MCF 10A (cell line): ENCODE measurements at regions of chr1 and their contacts with region 1.

Region 1: GRCh38 chr1:193104906-193105820 is at the start of gene GLRX2:
- DNase-seq: peak; percentile 90
- H3K4me3 Mint-ChIP-seq: peak within 1 kb of the TSS; percentile 91
- H3K27ac Mint-ChIP-seq: peak within 1 kb of the TSS; percentile 89
- H3K4me1 Mint-ChIP-seq: peaks cover 20% of the 10 kb centered on the region
- H3K27me3 Mint-ChIP-seq: no peaks in the 10 kb centered on the region
- CTCF ChIP-seq: no peak
- total RNA-seq, gene GLRX2: 59.8 and 74.2 TPM in 2 replicates

Region 2: GRCh38 chr1:192793983-192794767 is 311.0 kb before region 1 on chr1:
- CTCF ChIA-PET with region 1: no interaction called
- POLR2A ChIA-PET with region 1: no interaction called
- intact Hi-C with region 1: no loop called
- DNase-seq: no peak
- H3K4me3 Mint-ChIP-seq: no peak overlapping the region
- H3K27ac Mint-ChIP-seq: no peak overlapping the region
- H3K4me1 Mint-ChIP-seq: no peaks in the 10 kb centered on the region
- H3K27me3 Mint-ChIP-seq: no peaks in the 10 kb centered on the region
- CTCF ChIP-seq: no peak

Region 3: DNA sequence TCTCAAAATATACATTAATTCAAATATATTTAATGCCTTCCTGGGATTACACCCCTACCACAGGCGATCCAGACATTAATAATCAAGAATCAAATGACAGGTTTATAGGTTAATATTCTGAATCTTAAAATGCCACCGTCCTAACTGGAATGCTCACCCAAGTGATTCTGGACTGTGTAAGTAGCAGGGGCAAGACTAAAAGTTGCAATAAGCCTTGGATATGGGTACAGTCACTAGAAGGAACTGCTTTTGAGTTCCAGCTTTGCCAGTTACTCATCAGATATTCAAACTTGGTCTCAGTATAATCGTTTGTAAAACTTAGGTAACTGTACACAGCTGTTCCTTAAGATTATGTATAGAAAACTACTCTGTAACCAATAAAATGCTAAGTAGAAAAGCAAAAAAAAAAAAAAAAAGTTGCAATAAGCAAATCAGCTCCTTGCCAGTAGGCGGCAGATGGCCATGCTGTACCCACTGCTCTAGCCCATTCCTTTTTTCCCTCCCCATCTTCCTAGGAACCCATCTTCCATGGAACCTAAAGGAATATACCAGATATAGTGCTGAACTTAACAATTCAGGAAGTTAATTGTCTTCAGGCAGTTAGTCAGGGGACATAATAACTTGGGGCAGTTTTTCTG is 35.3 kb before region 1 on chr1:
- CTCF ChIA-PET with region 1: interaction called, 3 read pairs
- POLR2A ChIA-PET with region 1: interaction called, 19 read pairs
- intact Hi-C with region 1: no loop called
- DNase-seq: peak; percentile 50
- H3K4me3 Mint-ChIP-seq: no peak overlapping the region
- H3K27ac Mint-ChIP-seq: no peak overlapping the region
- H3K4me1 Mint-ChIP-seq: peaks cover 13% of the 10 kb centered on the region
- H3K27me3 Mint-ChIP-seq: no peaks in the 10 kb centered on the region
- CTCF ChIP-seq: peak; percentile 28

Region 4: GRCh38 chr1:193077991-193078390 is 27.2 kb before region 1 on chr1:
- CTCF ChIA-PET with region 1: interaction called, 3 read pairs
- POLR2A ChIA-PET with region 1: interaction called, 52 read pairs
- intact Hi-C with region 1: no loop called
- DNase-seq: no peak
- H3K4me3 Mint-ChIP-seq: no peak overlapping the region
- H3K27ac Mint-ChIP-seq: no peak overlapping the region
- H3K4me1 Mint-ChIP-seq: no peaks in the 10 kb centered on the region
- H3K27me3 Mint-ChIP-seq: no peaks in the 10 kb centered on the region
- CTCF ChIP-seq: no peak

Region 5: DNA sequence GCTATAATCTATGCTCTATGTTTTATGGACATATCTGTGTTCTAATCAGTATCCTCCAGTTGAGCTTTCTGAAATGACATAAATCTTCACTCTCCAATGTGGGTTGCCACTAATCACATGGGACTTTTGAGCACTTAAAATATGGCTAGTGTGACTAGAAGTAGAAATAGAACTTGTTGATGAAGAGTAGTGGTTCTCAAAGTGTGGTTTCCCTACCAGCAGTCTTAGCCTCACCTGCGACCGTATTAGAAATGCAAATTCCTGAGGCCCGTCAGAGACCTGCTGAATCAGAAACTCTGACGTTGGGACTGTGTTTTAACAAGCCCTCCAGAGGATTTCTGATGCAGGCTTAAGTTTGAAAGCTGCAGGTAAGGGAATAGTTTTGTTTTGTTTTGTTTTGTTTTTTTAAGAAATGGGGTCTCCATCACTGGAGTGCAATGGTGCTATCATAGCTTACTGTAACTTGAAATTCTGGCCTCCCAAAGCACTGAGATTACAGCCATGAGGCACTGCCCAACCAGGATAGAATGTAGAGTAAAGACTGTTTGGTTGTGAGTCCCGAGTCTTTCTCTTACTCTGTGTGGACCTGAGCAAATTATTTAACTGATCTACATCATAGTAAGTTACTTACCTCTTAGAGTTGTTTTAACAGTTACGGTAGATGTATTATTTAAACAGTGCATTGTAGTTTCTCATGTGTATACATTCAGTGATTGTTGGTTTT is 21.6 kb before region 1 on chr1:
- CTCF ChIA-PET with region 1: interaction called, 6 read pairs
- POLR2A ChIA-PET with region 1: interaction called, 52 read pairs
- intact Hi-C with region 1: no loop called
- DNase-seq: no peak
- H3K4me3 Mint-ChIP-seq: no peak overlapping the region
- H3K27ac Mint-ChIP-seq: no peak overlapping the region
- H3K4me1 Mint-ChIP-seq: no peaks in the 10 kb centered on the region
- H3K27me3 Mint-ChIP-seq: no peaks in the 10 kb centered on the region
- CTCF ChIP-seq: no peak

Region 6: DNA sequence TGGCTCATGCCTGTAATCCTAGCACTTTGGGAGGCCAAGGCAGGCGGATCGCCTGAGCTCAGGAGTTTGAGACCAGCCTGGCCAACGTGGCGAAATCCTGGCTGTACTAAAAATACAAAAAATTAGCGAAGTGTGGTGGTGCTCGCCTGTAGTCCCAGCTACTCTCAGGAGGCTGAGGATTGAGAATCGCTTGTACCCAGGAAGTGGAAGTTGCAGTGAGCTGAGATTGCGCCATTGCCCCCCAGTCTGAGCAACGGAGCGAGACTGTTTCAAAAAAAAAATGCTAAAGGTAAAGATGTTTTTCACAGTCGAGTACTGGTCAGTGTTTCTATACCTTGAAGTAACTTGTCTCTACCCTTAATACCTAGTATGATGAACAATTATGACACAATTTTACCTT is 11.1 kb before region 1 on chr1:
- CTCF ChIA-PET with region 1: interaction called, 6 read pairs
- POLR2A ChIA-PET with region 1: interaction called, 46 read pairs
- intact Hi-C with region 1: no loop called
- DNase-seq: no peak
- H3K4me3 Mint-ChIP-seq: no peak overlapping the region
- H3K27ac Mint-ChIP-seq: no peak overlapping the region
- H3K4me1 Mint-ChIP-seq: no peaks in the 10 kb centered on the region
- H3K27me3 Mint-ChIP-seq: no peaks in the 10 kb centered on the region
- CTCF ChIP-seq: no peak

Region 7: DNA sequence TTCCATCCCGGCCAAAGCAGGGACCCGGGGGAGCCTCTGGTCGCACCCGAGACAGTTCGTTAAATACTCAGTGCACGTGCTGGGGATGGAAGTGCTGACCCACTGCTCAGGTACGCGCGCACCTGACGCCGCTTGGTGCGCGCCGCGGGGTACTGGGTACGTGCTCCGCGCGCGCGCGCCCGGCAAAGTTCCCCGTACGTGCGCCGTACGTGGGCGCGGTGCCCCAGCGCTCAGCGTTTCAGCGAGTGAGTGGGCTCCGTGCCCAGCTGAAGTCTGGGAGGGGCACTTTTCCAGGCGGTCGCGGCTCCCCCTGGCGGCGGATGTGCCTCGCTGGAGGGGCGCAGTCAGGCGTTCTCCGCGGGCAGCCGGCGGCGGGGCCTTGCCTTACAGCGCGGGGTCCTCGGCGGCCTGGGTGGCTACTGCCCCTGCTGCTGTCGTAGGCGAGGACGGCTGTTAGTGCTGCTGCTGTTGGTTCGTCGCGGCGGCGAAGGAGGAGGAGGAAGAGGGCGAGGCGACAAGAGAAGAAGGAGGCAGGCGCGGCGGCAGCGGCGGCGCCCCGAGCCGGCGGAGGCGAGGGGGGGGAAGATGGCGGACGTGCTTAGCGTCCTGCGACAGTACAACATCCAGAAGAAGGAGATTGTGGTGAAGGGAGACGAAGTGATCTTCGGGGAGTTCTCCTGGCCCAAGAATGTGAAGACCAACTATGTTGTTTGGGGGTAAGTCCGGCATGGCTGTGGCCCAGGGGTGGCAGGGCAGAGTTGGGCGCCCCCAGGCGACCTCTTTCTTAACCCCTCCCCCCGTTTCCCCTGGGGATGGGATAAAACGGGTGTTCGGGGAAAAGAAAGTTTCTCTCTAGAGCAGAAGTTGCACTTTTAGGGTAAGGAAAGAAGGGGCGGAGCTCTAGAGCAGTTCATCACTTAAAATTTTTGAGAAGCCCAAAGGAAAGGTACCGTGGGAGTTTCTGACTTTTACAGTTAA is 16.7 kb after region 1 on chr1 and contains the start of gene CDC73:
- CTCF ChIA-PET with region 1: interaction called, 114 read pairs
- POLR2A ChIA-PET with region 1: interaction called, 302 read pairs
- intact Hi-C with region 1: loop called (anchors 1 kb)
- DNase-seq: peak; percentile 99
- H3K4me3 Mint-ChIP-seq: peak within 1 kb of the TSS; percentile 91
- H3K27ac Mint-ChIP-seq: peak within 1 kb of the TSS; percentile 88
- H3K4me1 Mint-ChIP-seq: peaks cover 20% of the 10 kb centered on the region
- H3K27me3 Mint-ChIP-seq: no peaks in the 10 kb centered on the region
- CTCF ChIP-seq: peak; percentile 99
- total RNA-seq, gene CDC73: 79.8 and 85.8 TPM in 2 replicates

Region 8: GRCh38 chr1:193229141-193229561 is 124.0 kb after region 1 on chr1:
- CTCF ChIA-PET with region 1: no interaction called
- POLR2A ChIA-PET with region 1: no interaction called
- intact Hi-C with region 1: no loop called
- DNase-seq: peak; percentile 50
- H3K4me3 Mint-ChIP-seq: no peak overlapping the region
- H3K27ac Mint-ChIP-seq: no peak overlapping the region
- H3K4me1 Mint-ChIP-seq: peaks cover 11% of the 10 kb centered on the region
- H3K27me3 Mint-ChIP-seq: no peaks in the 10 kb centered on the region
- CTCF ChIP-seq: no peak